Colonic mucosa (tissue), 4 donors: ENCODE measurements at regions of chr1 and their contacts with region 1.

Region 1: DNA sequence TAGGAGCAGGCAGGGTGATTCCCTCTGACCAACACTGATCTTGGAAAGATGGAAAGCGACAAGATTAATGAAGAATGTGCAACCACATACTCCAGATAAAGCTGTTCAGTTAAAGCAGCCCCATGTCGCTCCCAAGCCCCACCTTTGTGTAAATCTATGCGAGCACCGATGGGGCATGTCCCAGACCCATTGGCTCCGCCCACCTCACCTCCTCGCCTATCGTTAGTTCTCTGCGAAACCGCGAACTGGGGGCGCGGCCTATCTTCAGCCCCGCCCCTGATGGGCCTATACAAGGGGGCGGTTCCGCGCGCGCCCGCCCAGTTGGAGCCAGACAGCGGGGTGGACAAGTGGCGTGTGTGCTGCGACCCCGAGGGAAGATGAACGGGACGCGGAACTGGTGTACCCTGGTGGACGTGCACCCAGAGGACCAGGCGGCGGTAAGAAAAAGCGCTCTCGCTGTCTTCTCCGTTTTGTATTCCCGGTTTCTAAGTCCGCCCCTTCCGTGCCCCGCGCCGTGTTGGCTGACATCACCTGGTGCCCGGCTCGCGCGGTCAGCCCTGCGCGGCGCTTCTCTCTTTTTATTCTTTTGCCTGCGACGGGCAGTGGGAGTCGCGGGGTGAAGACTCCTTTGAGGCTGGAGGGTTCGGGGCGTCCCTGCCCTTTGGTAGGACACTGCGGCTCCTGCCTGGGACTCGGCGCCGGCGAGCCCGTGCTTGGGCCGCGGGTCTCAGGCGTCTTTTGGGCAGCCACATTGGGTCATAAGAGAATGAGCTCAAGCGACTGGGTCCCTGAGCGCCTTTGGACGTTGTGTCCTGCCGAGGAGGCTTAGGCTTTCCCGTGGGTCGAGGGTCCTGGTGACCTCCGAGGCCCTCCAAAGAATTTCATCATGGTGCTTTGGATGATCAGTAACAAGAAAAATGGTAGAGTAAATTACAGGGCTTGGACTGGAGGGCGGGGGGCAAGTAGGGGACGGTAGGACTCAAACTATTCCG is at the start of gene TUFT1:
- DNase-seq: peak; percentile 96
- H3K4me3 ChIP-seq: peak within 1 kb of the TSS; percentile 69
- H3K27ac ChIP-seq: peak within 1 kb of the TSS; percentile 95
- H3K4me1 ChIP-seq: no peaks in the 10 kb centered on the region
- H3K27me3 ChIP-seq: no peaks in the 10 kb centered on the region
- CTCF ChIP-seq: no peak
- total RNA-seq, gene TUFT1: 25.5 to 40.6 TPM

Region 2: GRCh38 chr1:151459331-151460046 is 80.8 kb before region 1 on chr1 and contains the start of gene POGZ:
- intact Hi-C with region 1: loop called (anchors 5 kb)
- DNase-seq: peak; percentile 97
- H3K4me3 ChIP-seq: peak within 1 kb of the TSS; percentile 59
- H3K27ac ChIP-seq: peak within 1 kb of the TSS; percentile 89
- H3K4me1 ChIP-seq: peaks cover 3% of the 10 kb centered on the region
- H3K27me3 ChIP-seq: no peaks in the 10 kb centered on the region
- CTCF ChIP-seq: no peak
- total RNA-seq, gene POGZ: 49.6 to 50.0 TPM

Region 3: DNA sequence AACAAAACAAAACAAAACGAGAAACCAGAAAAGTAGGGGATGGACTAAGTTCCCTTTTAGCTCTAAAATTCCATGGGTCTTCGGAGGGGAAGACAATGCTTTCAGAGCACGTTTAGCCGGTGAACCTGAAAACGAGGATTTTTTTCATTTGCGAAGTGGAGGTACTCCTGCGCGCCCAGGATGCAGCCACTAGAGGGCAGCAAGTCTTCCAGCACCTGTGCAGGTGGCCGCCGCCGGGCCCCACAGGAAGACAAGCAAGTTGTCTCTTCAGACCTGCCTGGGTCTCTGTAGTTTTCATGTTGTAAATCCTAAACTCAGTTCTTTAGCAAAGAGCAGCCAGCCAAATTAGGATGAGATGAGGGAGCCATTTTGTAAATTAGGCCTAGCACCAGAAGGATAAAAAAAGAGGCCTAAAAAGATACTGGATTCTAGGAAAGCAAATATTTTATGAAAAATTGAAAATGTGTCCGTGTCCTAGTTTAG is 53.9 kb after region 1 on chr1:
- intact Hi-C with region 1: no loop called
- DNase-seq: peak; percentile 87
- H3K4me3 ChIP-seq: no peak overlapping the region
- H3K27ac ChIP-seq: no peak overlapping the region
- H3K4me1 ChIP-seq: no peaks in the 10 kb centered on the region
- H3K27me3 ChIP-seq: no peaks in the 10 kb centered on the region
- CTCF ChIP-seq: peak; percentile 92

Region 4: GRCh38 chr1:151729966-151730291 is 189.6 kb after region 1 on chr1:
- intact Hi-C with region 1: loop called (anchors 5 kb)
- DNase-seq: peak; percentile 19
- H3K4me3 ChIP-seq: no peak overlapping the region
- H3K27ac ChIP-seq: peak overlapping the region; percentile 56
- H3K4me1 ChIP-seq: no peaks in the 10 kb centered on the region
- H3K27me3 ChIP-seq: no peaks in the 10 kb centered on the region
- CTCF ChIP-seq: no peak

Region 5: GRCh38 chr1:152415454-152416227 is 875.4 kb after region 1 on chr1:
- intact Hi-C with region 1: no loop called
- DNase-seq: no peak
- H3K4me3 ChIP-seq: no peak overlapping the region
- H3K27ac ChIP-seq: no peak overlapping the region
- H3K4me1 ChIP-seq: no peaks in the 10 kb centered on the region
- H3K27me3 ChIP-seq: no peaks in the 10 kb centered on the region
- CTCF ChIP-seq: no peak